Mammary epithelial cell (primary cell): ENCODE measurements at regions of chr3 and their contacts with region 1.

Region 1: GRCh38 chr3:9067352-9067975 is 104.2 kb upstream of the RAD18 start:
- DNase-seq: peak; percentile 23
- H3K4me3 ChIP-seq: no peak overlapping the region
- H3K27ac ChIP-seq: no peak overlapping the region
- H3K4me1 ChIP-seq: no peaks in the 10 kb centered on the region
- H3K27me3 ChIP-seq: no peaks in the 10 kb centered on the region
- CTCF ChIP-seq: peak; percentile 73 to 87

Region 2: GRCh38 chr3:8938021-8938420 is 129.4 kb before region 1 on chr3:
- CTCF ChIA-PET with region 1: no interaction called
- dilution Hi-C with region 1: no loop called
- in situ Hi-C with region 1: no loop called
- intact Hi-C with region 1: loop called (anchors 1 kb)
- DNase-seq: peak; percentile 11
- H3K4me3 ChIP-seq: no peak overlapping the region
- H3K27ac ChIP-seq: peak overlapping the region; percentile 75
- H3K4me1 ChIP-seq: peaks cover 18% of the 10 kb centered on the region
- H3K27me3 ChIP-seq: no peaks in the 10 kb centered on the region
- CTCF ChIP-seq: peak; percentile 43 to 53

Region 3: DNA sequence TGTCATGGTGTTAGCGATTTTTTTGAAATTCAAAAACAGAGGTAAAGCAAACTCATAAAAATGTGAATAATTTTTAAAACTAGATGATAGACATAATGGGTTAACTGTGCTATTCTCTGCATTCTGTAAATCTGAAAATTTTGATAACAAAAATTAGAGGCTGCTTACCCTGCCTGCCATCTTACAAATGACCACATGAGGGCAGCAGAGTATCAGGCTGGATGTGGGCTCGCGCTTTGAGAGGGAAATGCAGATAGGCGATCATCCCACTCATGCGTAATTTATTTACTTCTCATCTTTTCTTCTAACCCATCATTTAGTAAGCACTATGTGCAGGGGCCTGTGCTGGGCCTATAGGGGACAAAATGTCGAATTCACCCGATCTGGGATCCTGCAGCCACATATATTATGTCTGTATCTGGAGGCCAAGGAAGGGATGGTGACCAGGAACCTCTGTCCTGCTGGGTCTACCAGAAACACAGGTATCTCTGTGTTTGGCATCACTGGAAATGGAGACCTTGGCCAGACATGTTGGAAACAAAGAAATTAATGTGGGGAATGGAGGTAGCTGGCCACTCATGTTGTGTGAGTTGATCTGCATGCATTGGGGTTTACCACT is 96.4 kb before region 1 on chr3:
- CTCF ChIA-PET with region 1: no interaction called
- dilution Hi-C with region 1: no loop called
- in situ Hi-C with region 1: no loop called
- intact Hi-C with region 1: no loop called
- DNase-seq: peak; percentile 48
- H3K4me3 ChIP-seq: no peak overlapping the region
- H3K27ac ChIP-seq: no peak overlapping the region
- H3K4me1 ChIP-seq: no peaks in the 10 kb centered on the region
- H3K27me3 ChIP-seq: no peaks in the 10 kb centered on the region
- CTCF ChIP-seq: peak; percentile 98 to 99

Region 4: DNA sequence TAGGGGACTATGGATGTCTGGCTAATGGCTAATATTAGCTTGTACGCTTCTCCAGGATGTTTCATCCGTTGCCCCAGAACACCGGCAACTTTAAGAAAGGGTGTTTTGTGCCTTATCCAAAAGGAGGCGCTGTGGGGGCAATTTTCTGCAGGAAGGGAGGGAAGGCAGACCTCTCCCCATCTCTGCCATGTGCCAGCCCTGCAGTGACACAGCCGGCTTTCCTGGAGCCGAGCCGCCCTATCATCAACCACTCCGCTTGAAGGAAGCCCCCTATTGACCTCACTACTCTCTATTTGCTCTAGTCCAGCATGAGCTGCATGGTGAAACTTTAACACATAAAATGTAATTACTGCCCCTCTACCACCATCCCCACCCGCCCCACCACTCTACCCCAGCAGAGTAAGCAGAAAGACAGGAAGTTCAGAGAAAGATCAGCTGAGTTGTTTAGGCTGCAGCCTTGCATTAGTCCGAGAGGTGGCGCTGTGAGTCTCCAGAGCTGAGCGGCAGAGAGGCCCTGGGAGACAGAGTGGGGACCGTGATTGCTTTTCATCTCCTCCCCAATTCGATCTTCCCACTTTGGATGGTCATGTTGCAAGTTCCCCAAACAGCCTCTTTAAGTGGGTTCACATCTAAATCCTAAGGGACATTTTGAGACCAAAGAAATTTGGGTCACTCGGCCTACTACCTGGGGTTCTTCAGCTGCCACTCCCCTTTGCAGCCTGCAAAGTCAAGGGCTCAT is 79.7 kb before region 1 on chr3:
- CTCF ChIA-PET with region 1: no interaction called
- dilution Hi-C with region 1: no loop called
- in situ Hi-C with region 1: no loop called
- intact Hi-C with region 1: loop called (anchors 2 kb)
- DNase-seq: peak; percentile 50
- H3K4me3 ChIP-seq: no peak overlapping the region
- H3K27ac ChIP-seq: no peak overlapping the region
- H3K4me1 ChIP-seq: no peaks in the 10 kb centered on the region
- H3K27me3 ChIP-seq: no peaks in the 10 kb centered on the region
- CTCF ChIP-seq: peak; percentile 73 to 74

Region 5: DNA sequence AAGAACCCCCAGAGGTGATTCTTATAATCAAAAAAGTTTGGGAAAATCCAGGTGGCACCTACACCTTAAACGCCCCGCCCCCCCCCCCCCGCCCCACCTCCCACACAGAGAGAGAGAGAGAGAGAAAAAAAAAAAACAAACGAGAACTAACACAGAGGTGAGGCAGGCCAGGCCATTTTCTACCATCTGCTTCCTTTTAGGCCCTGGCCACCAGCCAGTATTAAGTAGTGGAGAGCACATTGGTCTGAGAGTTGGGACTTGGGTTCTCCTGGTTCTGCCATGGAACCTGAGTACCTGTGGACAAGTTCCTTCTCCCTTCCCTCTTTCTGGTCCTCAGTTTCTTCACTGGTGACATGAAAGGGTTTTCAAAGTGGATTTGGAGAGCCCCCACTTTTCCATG is 1809.2 kb after region 1 on chr3:
- CTCF ChIA-PET with region 1: no interaction called
- dilution Hi-C with region 1: no loop called
- in situ Hi-C with region 1: no loop called
- intact Hi-C with region 1: no loop called
- DNase-seq: no peak
- H3K4me3 ChIP-seq: no peak overlapping the region
- H3K27ac ChIP-seq: no peak overlapping the region
- H3K4me1 ChIP-seq: peaks cover 4% of the 10 kb centered on the region
- H3K27me3 ChIP-seq: no peaks in the 10 kb centered on the region
- CTCF ChIP-seq: no peak